ENCODE measurements at regions of chr1 and their contacts with region 1.

Region 1: DNA sequence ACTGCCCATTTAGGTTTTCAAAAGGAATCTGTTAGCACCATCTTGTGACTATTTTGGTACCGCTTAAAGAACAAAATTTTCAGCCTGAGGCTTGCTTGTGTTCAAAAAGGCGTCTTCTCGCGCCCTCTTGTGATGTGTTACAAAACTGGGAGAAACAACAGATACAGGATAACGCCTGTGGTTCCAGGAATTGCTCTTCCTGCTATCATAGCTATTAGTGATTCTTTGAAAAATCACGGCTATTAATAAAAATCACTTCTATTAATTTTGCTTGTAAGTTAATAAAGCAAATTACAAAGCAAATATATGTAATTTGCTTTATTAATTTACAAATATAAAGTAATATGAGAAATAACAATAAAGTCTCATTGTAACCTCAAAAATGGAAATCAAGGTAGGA is 82.2 kb upstream of the ABCD3 start:
- DNase-seq: peak; percentile 34
- CTCF ChIP-seq: peak; percentile 78

Region 2: GRCh38 chr1:94061513-94062443 is 274.2 kb before region 1 on chr1:
- in situ Hi-C with region 1: loop called (anchors 10 kb)
- DNase-seq: peak; percentile 68
- CTCF ChIP-seq: peak; percentile 84

Region 3: DNA sequence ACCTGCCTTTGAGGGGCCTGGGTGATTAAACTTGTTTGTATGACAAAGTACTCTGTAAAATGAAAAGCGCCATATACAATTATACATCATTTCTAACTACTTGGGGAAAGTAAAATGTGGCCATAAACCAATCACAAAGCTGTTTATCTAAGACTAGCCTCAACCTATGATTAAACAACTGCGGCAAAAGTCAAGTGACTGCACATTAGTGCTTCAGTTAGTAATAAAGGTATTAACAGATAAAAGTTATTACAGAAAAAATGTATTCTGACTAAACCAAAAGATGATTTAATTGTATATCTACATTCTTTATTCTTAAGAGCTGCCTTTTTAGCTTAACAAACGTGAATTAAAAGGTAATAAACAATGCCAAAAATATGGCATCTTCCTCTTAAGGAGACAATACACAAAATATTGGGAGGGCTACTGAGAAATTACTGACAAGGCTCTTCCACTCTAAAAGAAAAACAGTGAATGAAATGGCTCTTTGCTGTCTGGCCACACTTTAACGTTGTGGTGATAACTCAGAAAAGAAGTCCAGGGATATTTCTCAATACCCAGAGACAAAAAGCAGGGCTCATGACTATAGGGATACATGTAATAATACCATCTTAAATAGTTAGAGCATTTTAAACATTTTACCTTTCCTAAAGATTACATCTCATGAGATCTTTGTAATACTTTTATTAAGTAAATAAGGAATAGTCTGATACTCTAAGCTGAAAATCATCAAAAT is 107.1 kb before region 1 on chr1:
- in situ Hi-C with region 1: no loop called
- DNase-seq: no peak
- CTCF ChIP-seq: no peak

Measured in GM13977 (cell line).